ENCODE measurements at regions of chr20 and their contacts with region 1.

Region 1: DNA sequence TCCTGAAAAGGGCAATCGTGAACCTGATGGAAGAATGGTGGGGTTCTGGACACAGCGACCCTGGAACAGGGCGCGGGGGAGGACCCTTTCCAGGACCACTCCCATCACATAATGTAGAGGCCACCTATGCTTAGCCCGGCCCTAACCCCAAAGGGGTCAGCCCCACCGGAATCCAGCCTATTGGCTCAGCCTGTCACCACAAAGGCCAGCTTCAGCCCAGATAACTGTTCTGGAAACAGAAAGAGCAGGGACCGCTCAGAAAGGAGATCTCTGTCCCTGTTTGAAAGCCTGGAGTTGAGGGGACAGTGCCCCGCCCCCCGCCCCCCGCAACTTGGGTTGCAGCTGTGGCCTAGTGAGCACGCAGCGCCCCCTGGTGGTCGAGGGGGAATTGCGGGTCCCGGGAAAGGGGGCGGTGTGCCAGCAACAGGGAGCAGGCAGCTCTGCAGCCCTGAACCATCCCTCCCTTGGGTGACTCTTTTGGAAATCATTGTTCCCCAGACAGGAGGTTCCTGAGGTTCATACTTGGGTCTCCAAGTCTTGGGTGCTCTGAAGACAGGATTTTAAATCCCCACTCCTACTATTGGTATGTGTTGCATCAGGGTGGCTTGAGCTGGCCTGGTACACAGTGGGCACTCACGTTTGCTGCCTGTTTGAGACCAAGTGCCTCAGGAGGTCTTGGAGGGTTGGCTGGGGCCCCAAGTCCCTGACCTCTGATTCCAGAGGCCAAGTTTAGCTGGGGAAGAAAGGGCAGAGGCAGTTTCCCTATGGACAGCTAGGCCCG is 1.5 kb downstream of the SIGLEC1 start:
- DNase-seq: peak; percentile 86
- ATAC-seq: peak; percentile 86
- H3K4me3 Mint-ChIP-seq: no peak overlapping the region
- H3K27ac Mint-ChIP-seq: no peak overlapping the region
- H3K4me1 Mint-ChIP-seq: no peaks in the 10 kb centered on the region
- H3K27me3 Mint-ChIP-seq: peaks cover 1% of the 10 kb centered on the region
- CTCF ChIP-seq: peak; percentile 96

Region 2: DNA sequence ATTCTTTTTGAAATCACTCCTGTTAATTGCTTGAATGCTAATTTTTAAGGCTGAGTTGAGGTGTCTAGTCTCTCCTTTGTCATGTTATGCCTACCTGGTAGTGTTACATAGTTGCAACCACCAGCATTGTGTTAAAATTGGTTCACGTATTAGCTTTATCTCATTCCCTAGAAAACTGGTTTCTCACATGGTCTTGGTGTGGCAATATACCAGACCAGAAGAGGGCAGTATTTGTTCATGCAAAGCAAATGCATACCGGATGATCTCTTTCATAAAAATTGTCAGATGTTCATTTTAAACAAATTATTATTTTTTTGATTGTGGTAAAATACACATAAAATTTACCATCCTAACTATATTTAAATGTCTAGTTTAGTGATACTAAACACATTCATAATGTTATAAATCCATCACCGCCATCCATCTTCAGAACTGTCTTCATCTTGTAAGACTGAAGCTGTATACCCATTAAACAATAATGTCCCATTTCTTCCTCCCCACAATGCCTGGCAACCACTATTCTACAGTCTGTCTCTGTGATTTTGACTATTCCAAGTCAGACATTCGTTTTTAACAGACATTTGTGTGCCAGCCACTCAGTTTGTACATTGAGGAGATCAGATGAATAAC is 147.2 kb before region 1 on chr20:
- CTCF ChIA-PET with region 1: interaction called, 28 read pairs
- POLR2A ChIA-PET with region 1: no interaction called
- intact Hi-C with region 1: no loop called
- DNase-seq: peak; percentile 9
- ATAC-seq: peak; percentile 55
- H3K4me3 Mint-ChIP-seq: no peak overlapping the region
- H3K27ac Mint-ChIP-seq: no peak overlapping the region
- H3K4me1 Mint-ChIP-seq: no peaks in the 10 kb centered on the region
- H3K27me3 Mint-ChIP-seq: no peaks in the 10 kb centered on the region
- CTCF ChIP-seq: peak; percentile 88

Region 3: DNA sequence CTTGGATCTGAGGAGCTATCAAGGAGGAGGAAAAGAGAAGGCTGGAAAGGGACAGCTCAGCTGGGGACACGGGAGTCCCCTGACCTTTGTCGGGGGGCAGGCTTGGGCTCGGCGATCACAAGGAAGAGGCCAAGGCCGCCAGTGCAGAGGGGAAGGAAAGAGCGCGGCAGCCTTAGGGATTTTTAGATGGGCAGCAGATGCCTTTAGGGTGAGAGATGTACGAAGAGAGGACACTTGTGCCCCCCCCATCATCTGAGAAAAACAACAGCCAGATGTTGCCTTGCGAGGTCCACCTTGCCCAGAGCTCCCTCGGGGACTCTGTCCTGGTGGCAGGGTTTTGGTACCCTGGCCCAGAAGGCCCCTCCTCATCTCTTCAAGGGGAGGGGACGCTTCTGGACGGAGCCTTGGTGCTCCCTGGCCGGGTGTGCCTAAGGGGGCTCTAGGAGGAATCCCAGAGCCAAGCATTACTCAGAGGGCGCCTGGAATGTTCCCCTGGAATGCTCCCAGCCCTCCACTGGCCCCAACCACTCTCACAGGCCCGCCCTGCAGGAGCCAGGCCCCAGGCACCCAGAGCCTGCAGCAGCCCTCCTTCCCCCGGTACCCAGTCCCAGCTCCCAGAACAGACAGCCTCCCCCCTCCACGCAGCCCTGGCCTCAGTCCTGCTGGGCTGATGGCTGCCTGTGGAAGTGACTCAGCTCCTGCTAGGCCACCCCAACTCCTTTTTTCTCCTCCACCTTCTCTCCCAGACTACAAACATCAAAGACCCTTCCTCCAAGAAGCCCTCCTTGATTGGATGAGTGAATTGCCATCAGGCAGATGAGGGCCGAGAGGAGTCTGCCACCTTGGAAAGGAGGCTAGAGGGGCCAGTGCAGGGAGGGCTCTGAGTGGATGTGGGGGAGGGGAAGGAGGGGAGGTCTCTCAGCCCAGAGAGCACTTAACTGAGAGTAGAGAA is 30.9 kb before region 1 on chr20:
- CTCF ChIA-PET with region 1: interaction called, 79 read pairs
- POLR2A ChIA-PET with region 1: interaction called, 4 read pairs
- intact Hi-C with region 1: loop called (anchors 5 kb)
- DNase-seq: no peak
- ATAC-seq: no peak
- H3K4me3 Mint-ChIP-seq: no peak overlapping the region
- H3K27ac Mint-ChIP-seq: no peak overlapping the region
- H3K4me1 Mint-ChIP-seq: no peaks in the 10 kb centered on the region
- H3K27me3 Mint-ChIP-seq: peaks cover 43% of the 10 kb centered on the region
- CTCF ChIP-seq: no peak

Region 4: DNA sequence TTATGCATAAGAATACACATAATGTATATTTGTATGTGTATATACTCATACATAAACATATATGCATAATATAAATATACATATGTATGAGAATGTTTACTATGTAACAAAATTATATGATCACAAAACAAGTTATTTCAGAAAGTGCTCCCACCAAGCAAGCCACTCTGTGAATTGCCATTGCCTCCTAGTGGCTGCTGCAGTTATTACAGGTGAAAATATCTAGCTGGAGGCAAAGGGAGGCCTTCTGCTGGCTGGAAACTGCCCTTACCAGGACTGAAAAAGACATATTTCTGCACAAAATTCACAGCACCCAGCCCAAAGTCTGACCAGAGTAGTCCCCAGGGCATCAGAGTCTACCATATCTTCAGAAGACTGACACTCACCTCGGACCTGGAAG is 14.7 kb before region 1 on chr20:
- CTCF ChIA-PET with region 1: interaction called, 25 read pairs
- POLR2A ChIA-PET with region 1: no interaction called
- intact Hi-C with region 1: no loop called
- DNase-seq: peak; percentile 25
- ATAC-seq: no peak
- H3K4me3 Mint-ChIP-seq: no peak overlapping the region
- H3K27ac Mint-ChIP-seq: no peak overlapping the region
- H3K4me1 Mint-ChIP-seq: no peaks in the 10 kb centered on the region
- H3K27me3 Mint-ChIP-seq: no peaks in the 10 kb centered on the region
- CTCF ChIP-seq: peak; percentile 64

Region 5: GRCh38 chr20:3739054-3739925 is 28.4 kb after region 1 on chr20:
- CTCF ChIA-PET with region 1: interaction called, 10 read pairs
- POLR2A ChIA-PET with region 1: no interaction called
- intact Hi-C with region 1: no loop called
- DNase-seq: no peak
- ATAC-seq: no peak
- H3K4me3 Mint-ChIP-seq: no peak overlapping the region
- H3K27ac Mint-ChIP-seq: no peak overlapping the region
- H3K4me1 Mint-ChIP-seq: no peaks in the 10 kb centered on the region
- H3K27me3 Mint-ChIP-seq: no peaks in the 10 kb centered on the region
- CTCF ChIP-seq: no peak

Measured in activated CD8-positive, alpha-beta T cell treated with anti-CD3 and anti-CD28 coated beads for 36 hours (primary cell).